WTC11 (cell line): ENCODE measurements at regions of chr15 and their contacts with region 1.

Region 1: DNA sequence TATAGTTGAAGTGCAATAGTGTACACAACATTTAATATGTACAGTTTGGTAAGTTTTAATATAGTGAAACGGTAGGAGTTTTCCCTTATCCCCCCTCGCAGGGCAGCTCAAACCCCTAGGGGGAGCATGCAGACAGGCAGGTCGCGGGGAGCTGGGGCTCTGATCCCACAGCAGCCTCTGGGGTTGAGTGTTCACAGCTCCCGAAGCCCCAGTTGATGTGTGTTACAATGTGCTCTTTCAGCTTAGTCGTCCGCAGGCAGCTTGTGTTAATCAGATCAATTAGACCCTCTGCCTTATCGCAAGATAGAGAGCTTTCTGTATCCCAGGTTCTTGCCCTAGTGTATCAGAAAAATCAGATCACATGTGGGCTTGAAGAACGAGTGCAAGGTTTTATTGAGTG is 143.1 kb upstream of the CHRNA7 start:
- DNase-seq: peak; percentile 64
- ATAC-seq: peak; percentile 95
- H3K4me3 Mint-ChIP-seq: no peak overlapping the region; the same call in 1 of the 2 replicates
- H3K27ac Mint-ChIP-seq: no peak overlapping the region
- H3K4me1 Mint-ChIP-seq: no peaks in the 10 kb centered on the region
- H3K27me3 Mint-ChIP-seq: peaks cover 2% of the 10 kb centered on the region; the same call in 1 of the 2 replicates
- CTCF ChIP-seq: no peak

Region 2: DNA sequence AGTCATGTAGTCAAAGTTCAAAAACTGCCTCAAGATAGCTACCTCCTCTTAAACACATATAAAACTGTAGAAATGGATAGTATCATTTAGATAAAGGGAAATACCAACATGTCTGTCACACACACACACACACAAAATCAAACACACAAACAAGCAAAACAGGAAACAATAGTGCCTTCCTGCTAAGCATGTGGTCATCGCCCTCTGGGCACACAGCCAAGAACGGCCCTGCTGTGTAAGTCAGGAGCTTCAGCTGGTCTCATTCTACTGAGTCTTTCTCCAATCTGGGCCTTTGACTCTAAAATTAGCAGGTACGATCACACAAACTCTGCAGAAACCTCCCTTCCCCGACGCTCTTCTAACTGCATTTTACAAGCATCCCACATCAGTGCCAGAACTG is 129.1 kb before region 1 on chr15:
- CTCF ChIA-PET with region 1: no interaction called
- POLR2A ChIA-PET with region 1: no interaction called
- DNase-seq: no peak
- ATAC-seq: no peak
- H3K4me3 Mint-ChIP-seq: no peak overlapping the region
- H3K27ac Mint-ChIP-seq: no peak overlapping the region
- H3K4me1 Mint-ChIP-seq: peaks cover 4% of the 10 kb centered on the region; the same call in 1 of the 2 replicates
- H3K27me3 Mint-ChIP-seq: no peaks in the 10 kb centered on the region; the same call in 1 of the 2 replicates
- CTCF ChIP-seq: no peak

Region 3: DNA sequence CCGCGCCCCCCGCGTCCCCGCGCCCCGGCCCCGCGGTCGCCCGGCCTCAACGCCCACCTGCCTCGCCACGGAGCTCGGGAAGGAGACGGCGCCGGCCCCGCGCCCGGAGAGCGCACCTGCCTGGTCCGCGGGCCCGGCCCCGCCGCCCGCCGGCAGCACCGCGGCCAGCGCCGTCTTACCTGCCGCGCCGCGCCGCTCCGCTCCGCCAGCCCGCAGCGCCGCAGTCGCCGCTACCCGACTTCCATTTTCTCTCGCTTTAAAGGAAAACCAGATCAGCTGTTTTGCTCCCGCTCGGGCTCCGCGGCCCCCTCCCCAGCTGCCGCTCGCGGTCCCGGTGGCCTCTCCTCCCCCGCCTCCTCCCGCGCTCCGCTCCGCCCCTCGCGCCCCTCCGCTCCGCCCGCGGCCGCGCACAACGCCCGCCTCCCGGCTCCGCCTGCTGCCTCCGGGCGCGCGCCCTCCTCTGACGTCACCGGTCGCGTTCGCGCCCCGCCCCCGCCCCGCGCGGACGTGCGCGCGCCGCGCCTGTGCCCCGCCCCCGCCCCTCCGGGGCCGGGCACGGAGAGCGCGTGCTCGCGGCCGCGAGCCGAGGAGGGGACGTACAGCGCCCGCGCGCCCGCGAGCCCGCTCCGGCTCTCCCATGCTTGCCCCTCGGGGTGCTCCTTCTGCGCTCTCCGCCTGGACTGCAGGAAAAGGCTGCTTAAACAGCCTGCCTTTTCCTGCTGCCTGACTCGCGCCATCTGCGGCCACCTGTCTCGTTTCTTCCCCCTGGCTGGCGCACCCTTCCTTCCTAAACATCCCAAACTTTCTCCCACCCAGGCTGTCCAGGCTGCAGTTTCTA is 16.7 kb before region 1 on chr15:
- CTCF ChIA-PET with region 1: interaction called, 17 read pairs
- POLR2A ChIA-PET with region 1: no interaction called
- DNase-seq: peak; percentile 84
- ATAC-seq: peak; percentile 82
- H3K4me3 Mint-ChIP-seq: peak within 1 kb of the TSS; percentile 78
- H3K27ac Mint-ChIP-seq: peak within 1 kb of the TSS; percentile 86
- H3K4me1 Mint-ChIP-seq: peaks cover 18% of the 10 kb centered on the region
- H3K27me3 Mint-ChIP-seq: peaks cover 20% of the 10 kb centered on the region
- CTCF ChIP-seq: no peak

Region 4: DNA sequence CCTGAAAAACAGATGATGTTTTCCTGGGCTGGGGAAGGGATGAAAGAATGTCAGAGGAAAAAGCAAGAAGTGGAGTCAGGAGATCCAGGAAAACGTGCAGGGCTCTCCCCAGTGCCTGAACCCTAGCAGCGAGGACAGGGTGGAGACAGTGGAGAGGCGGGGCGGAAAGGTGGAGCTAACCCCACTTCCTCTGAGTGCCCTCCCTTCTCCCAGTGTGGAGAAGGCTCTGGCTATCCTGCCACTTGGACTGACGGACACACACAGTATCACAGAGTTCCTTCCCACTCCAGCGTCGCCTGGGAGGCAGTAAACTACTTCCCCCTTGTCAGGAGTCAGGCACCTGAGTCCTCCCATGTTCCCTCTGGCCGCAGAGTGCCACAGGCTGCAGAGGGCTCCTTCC is 17.8 kb after region 1 on chr15:
- CTCF ChIA-PET with region 1: interaction called, 18 read pairs
- POLR2A ChIA-PET with region 1: no interaction called
- DNase-seq: peak; percentile 31
- ATAC-seq: peak; percentile 97
- H3K4me3 Mint-ChIP-seq: peak overlapping the region; percentile 2; the same call in 1 of the 2 replicates
- H3K27ac Mint-ChIP-seq: no peak overlapping the region; the same call in 1 of the 2 replicates
- H3K4me1 Mint-ChIP-seq: peaks cover 25% of the 10 kb centered on the region
- H3K27me3 Mint-ChIP-seq: no peaks in the 10 kb centered on the region
- CTCF ChIP-seq: no peak

Region 5: DNA sequence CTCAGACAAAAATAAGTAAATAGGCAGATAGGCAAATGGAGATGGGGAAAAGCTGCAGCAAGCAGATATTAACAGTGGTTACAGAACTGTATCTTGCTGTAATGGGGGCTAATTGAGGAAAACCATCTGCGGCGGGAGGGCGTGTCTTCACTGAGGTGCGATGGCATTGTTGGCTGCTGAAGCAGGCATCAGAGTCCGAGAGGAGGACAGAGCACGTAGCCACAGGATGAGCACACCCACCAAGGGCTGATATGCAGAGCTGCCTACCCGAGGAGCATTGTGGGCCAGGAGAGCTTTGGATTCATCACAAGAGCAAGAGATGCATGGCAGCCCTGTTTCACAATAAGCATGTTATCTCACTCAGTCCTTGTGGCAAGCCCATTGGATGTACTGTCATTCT is 173.5 kb after region 1 on chr15:
- CTCF ChIA-PET with region 1: no interaction called
- POLR2A ChIA-PET with region 1: no interaction called
- DNase-seq: no peak
- ATAC-seq: no peak
- H3K4me3 Mint-ChIP-seq: no peak overlapping the region
- H3K27ac Mint-ChIP-seq: no peak overlapping the region
- H3K4me1 Mint-ChIP-seq: peaks cover 8% of the 10 kb centered on the region; the same call in 1 of the 2 replicates
- H3K27me3 Mint-ChIP-seq: no peaks in the 10 kb centered on the region
- CTCF ChIP-seq: no peak